Mammary epithelial cell (primary cell): ENCODE measurements at regions of chr13 and their contacts with region 1.

Region 1: DNA sequence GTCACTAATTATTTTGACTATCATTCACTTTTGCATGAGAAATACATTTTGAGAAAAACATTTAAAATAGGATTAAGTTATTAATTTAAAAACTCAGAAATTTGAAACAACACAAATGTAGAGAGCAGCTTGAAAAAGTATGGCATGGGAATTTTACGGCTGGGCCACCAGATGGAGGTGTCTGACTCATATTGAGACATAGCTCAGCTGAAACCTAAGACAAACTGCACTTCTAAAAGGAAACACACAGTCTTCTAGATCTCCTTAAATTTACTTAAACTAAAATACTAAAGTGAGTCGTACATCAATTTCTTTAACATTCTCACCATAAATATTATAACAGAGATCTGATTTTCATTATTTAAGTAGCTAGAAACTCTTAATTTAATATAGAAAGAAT is 41.9 kb upstream of the POSTN start:
- DNase-seq: peak; percentile 21
- H3K4me3 ChIP-seq: no peak overlapping the region
- H3K27ac ChIP-seq: no peak overlapping the region
- H3K4me1 ChIP-seq: no peaks in the 10 kb centered on the region
- H3K27me3 ChIP-seq: no peaks in the 10 kb centered on the region
- CTCF ChIP-seq: peak; percentile 53 to 74

Region 2: GRCh38 chr13:38045307-38046048 is 405.0 kb after region 1 on chr13:
- CTCF ChIA-PET with region 1: no interaction called
- dilution Hi-C with region 1: no loop called
- in situ Hi-C with region 1: no loop called
- intact Hi-C with region 1: loop called (anchors 1 kb)
- DNase-seq: peak; percentile 27
- H3K4me3 ChIP-seq: no peak overlapping the region
- H3K27ac ChIP-seq: no peak overlapping the region
- H3K4me1 ChIP-seq: no peaks in the 10 kb centered on the region
- H3K27me3 ChIP-seq: no peaks in the 10 kb centered on the region
- CTCF ChIP-seq: peak; percentile 56 to 71

Region 3: GRCh38 chr13:38530492-38530891 is 890.0 kb after region 1 on chr13:
- CTCF ChIA-PET with region 1: interaction called, 4 read pairs
- dilution Hi-C with region 1: no loop called
- in situ Hi-C with region 1: loop called in 1 of 2 experiments (anchors 25 kb)
- intact Hi-C with region 1: loop called (anchors 2 kb)
- DNase-seq: peak; percentile 5
- H3K4me3 ChIP-seq: no peak overlapping the region
- H3K27ac ChIP-seq: no peak overlapping the region
- H3K4me1 ChIP-seq: no peaks in the 10 kb centered on the region
- H3K27me3 ChIP-seq: peaks cover 3% of the 10 kb centered on the region
- CTCF ChIP-seq: peak; percentile 47 to 54